ENCODE measurements at regions of chr2 and their contacts with region 1.

Region 1: DNA sequence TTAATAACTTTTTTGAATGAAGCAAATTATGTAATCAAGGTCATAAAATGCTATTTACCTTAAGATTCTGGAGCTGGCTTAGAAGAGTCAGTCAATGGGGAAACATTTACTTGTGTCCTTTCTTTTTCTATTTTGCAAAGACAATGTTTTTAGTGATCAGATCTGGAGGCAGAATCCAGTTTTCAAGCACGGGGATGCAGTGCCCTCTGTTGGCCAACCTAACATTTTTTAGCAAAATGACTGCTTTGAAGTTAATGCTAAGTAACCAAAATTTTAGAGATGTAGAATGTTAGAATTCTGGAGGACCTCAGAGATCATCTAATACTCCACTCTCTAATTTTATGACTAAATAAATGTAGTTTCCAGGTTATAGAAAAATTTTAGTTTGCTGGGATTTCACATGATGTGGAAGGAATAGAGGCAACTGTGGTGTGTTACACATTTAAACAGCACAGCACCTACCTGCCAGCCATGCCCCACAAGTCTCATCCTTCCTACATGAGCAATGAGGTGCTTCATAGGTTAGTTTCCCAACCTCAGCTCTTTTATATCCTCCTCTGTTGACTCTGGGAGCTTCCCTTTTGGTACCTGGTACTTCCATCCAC is 23.6 kb upstream of the SLC9A4 start:
- DNase-seq: no peak
- H3K4me3 ChIP-seq: no peak overlapping the region
- H3K27ac ChIP-seq: peak overlapping the region in 2 of 8 donors; percentile 1 to 37
- H3K4me1 ChIP-seq: peaks cover 0 to 7% (median 0%) of the 10 kb centered on the region in 6 donors
- H3K27me3 ChIP-seq: no peaks in the 10 kb centered on the region
- CTCF ChIP-seq: peak; percentile 17 to 76 (median 60)
- POLR2A ChIP-seq: no peak

Region 2: DNA sequence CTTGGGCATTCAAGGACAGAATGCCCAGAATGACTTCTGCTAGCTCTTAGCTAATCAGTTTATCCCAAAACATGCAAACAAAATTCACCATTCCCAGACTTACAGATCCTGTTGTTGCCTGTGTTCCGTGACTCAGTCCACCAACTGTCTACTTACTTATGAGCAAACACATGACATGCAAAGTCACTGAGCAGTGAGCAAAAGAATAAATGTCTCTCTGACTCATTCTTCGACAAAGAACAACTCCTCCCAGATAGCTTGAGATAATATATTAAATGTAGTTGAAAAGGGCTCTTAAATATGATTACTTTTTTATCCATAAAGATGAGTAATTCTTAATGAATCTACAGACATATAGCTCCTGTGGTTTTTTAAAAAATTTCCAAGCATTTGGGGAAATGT is 1053.2 kb before region 1 on chr2:
- intact Hi-C with region 1: no loop called
- DNase-seq: no peak
- H3K4me3 ChIP-seq: no peak overlapping the region
- H3K27ac ChIP-seq: no peak overlapping the region
- H3K4me1 ChIP-seq: peaks cover 4 to 26% (median 20%) of the 10 kb centered on the region in 6 donors
- H3K27me3 ChIP-seq: peaks cover 0 to 41% (median 0%) of the 10 kb centered on the region in 7 donors
- CTCF ChIP-seq: no peak
- POLR2A ChIP-seq: no peak

Region 3: GRCh38 chr2:101419096-101419663 is 1030.3 kb before region 1 on chr2:
- intact Hi-C with region 1: loop called (anchors 5 kb)
- DNase-seq: no peak
- H3K4me3 ChIP-seq: no peak overlapping the region
- H3K27ac ChIP-seq: no peak overlapping the region
- H3K4me1 ChIP-seq: no peaks in the 10 kb centered on the region
- H3K27me3 ChIP-seq: no peaks in the 10 kb centered on the region
- CTCF ChIP-seq: peak; percentile 42 to 82 (median 73)
- POLR2A ChIP-seq: no peak

Region 4: DNA sequence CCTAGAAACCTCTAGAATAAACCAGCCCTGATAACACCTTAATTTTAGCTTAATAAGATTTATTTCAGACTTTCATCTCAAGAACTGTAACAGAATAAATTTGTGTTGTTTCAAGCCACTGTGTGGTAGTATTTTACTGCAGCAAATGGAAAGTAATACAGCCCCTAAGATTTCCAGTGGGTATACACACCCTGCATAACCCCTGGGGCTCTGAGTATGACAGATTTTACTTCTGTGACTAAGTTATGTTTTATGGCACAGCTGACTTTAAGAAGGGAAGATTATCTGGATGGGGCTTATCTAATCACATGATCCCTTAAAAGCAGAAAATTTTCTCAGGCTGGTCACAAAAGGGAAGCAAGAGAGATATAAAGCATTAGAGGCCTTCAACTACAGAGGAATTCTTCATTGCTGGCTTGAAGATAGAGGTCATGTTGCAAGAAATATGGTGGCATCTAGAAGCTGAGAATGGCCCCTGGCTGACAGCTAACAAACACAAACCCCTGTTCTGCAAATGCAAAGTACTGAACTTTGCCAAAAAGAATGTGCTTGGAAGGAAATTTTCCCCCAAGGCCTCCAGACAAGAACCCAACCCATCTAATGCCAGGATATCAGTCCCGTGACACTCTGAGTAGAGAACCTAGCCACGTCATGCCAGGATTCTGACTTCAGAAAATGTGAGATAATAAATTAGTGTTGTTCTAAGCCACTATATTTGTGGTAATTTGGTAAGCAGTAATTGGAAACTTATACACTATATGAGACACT is 102.0 kb after region 1 on chr2:
- intact Hi-C with region 1: no loop called
- DNase-seq: no peak
- H3K4me3 ChIP-seq: no peak overlapping the region
- H3K27ac ChIP-seq: no peak overlapping the region
- H3K4me1 ChIP-seq: no peaks in the 10 kb centered on the region
- H3K27me3 ChIP-seq: no peaks in the 10 kb centered on the region
- CTCF ChIP-seq: no peak
- POLR2A ChIP-seq: no peak